PC-9 (cell line): ENCODE measurements at regions of chr1 and their contacts with region 1.

Region 1: GRCh38 chr1:43783671-43784205 is 76.4 kb downstream of the ST3GAL3 start:
- DNase-seq: peak; percentile 93 to 98
- H3K4me3 ChIP-seq: no peak overlapping the region; the same call in 1 of the 2 replicates
- H3K27ac ChIP-seq: peak overlapping the region; percentile 99
- H3K4me1 ChIP-seq: peaks cover 48% of the 10 kb centered on the region
- H3K27me3 ChIP-seq: no peaks in the 10 kb centered on the region
- CTCF ChIP-seq: no peak

Region 2: GRCh38 chr1:43822040-43822439 is 38.3 kb after region 1 on chr1:
- CTCF ChIA-PET with region 1: interaction called, 3 read pairs
- POLR2A ChIA-PET with region 1: no interaction called
- intact Hi-C with region 1: loop called (anchors 1 kb)
- DNase-seq: peak; percentile 65 to 90
- H3K4me3 ChIP-seq: no peak overlapping the region
- H3K27ac ChIP-seq: peak overlapping the region; percentile 87
- H3K4me1 ChIP-seq: peaks cover 41% of the 10 kb centered on the region
- H3K27me3 ChIP-seq: no peaks in the 10 kb centered on the region
- CTCF ChIP-seq: no peak

Region 3: DNA sequence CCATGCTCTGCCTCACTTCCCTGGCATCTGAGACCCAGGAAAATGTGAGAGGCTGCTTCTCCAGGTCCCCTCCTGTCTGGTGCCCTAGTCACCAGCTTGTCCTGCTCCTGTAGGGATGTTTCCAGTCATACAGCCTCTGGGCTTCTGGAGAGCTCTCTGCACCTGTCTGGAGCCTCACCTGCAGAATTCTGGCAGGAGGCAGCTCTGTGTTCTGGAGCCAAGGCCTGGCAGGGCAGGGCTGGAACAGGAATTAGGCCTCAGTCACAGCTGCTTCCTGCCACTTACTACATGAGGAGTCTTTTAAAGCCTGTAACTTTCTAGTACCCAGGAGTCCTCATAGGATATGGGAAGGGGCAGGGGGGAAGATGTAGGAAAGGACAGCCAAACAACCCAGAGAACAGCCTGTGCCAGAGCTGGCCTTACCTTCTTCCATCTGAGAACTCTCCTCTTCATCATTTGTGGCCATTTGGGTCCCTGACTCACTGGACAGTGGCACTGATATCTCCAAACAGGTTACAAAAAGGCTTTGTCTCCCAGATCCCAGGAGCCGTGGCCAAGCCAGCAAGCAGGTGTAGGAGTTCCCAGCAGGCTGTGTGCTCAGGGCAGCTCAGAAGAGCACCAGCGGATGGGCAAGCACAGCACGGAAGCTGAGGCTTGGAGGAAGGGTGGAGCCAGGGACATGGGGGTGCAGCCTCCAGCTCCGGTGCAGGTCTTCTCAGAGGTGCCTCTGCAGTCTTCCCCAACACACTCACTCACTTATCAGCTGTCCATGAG is 118.5 kb after region 1 on chr1:
- CTCF ChIA-PET with region 1: no interaction called
- POLR2A ChIA-PET with region 1: no interaction called
- intact Hi-C with region 1: no loop called
- DNase-seq: no peak
- H3K4me3 ChIP-seq: no peak overlapping the region
- H3K27ac ChIP-seq: no peak overlapping the region
- H3K4me1 ChIP-seq: no peaks in the 10 kb centered on the region
- H3K27me3 ChIP-seq: no peaks in the 10 kb centered on the region
- CTCF ChIP-seq: no peak

Region 4: GRCh38 chr1:43946236-43947060 is 162.7 kb after region 1 on chr1 and contains the start of gene IPO13:
- CTCF ChIA-PET with region 1: no interaction called
- POLR2A ChIA-PET with region 1: no interaction called
- intact Hi-C with region 1: no loop called
- DNase-seq: peak; percentile 86 to 98
- H3K4me3 ChIP-seq: peak within 1 kb of the TSS; percentile 74
- H3K27ac ChIP-seq: peak within 1 kb of the TSS; percentile 75
- H3K4me1 ChIP-seq: peaks cover 26% of the 10 kb centered on the region
- H3K27me3 ChIP-seq: no peaks in the 10 kb centered on the region
- CTCF ChIP-seq: peak; percentile 79
- total RNA-seq, gene IPO13: 25.0 and 27.2 TPM in 2 replicates